H1 (cell line): ENCODE measurements at regions of chr11 and their contacts with region 1.

Region 1: GRCh38 chr11:76919887-76920746 is 59.4 kb downstream of the ACER3 start:
- DNase-seq: peak in 1 of 2 experiments; percentile 71
- H3K4me3 ChIP-seq: no peak overlapping the region
- H3K27ac ChIP-seq: no peak overlapping the region
- H3K4me1 ChIP-seq: peaks cover 0 to 2% (median 0%) of the 10 kb centered on the region in 4 experiments; a peak in 2 of 7 replicates
- H3K27me3 ChIP-seq: no peaks in the 10 kb centered on the region
- CTCF ChIP-seq: peak; percentile 33 to 79 (median 75)
- EP300 ChIP-seq: no peak
- POLR2A ChIP-seq: no peak
- RAD21 ChIP-seq: peak; percentile 64 to 73

Region 2: DNA sequence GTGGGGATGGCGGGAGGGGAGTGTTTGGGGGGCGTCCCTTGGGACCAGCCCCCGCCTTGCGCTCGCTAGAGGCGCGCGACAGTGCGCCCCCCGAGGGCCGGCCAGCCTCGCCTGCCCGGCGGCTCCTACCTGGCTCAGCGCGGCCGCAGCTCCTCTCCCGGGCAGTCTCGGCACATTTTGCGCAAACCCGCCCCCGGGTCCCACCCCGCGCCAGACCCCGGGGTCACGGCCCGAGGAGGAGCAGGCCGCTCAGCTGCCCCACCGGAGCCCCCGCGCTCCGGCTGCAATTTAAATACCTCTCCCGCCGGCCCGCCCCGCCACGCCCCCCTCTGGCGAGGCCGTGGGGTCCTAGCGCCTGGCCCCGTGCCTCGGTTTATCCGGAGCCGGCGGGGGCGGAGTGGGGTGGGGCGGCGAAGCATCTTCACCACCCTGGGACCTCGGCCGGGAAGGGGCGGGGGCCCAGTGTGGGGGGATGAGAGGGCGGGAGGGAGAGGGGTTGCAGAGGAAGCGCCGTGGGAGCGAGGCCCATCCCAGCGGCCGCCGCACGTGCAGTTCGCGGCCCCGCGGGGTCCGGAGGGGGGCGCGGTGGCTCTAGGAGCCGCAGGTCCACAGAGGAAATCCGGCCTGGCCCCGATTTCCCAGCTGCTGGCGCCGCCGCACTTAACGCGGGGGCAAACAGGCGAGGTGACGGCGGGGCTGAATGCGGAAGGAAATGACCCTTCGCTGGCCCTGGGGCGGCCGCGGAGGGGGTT is 249.5 kb before region 1 on chr11 and contains the start of gene LRRC32:
- CTCF ChIA-PET with region 1: no interaction called
- POLR2A ChIA-PET with region 1: no interaction called
- DNase-seq: peak in 1 of 2 experiments; percentile 77
- H3K4me3 ChIP-seq: peak within 1 kb of the TSS; percentile 47 to 68 (median 53)
- H3K27ac ChIP-seq: no peak within 1 kb of the TSS
- H3K4me1 ChIP-seq: peaks cover 0 to 6% (median 1%) of the 10 kb centered on the region in 4 experiments; a peak in 5 of 7 replicates
- H3K27me3 ChIP-seq: peaks cover 0 to 26% (median 17%) of the 10 kb centered on the region in 4 experiments; a peak in 5 of 7 replicates
- CTCF ChIP-seq: no peak
- EP300 ChIP-seq: no peak
- POLR2A ChIP-seq: no peak
- RAD21 ChIP-seq: no peak
- total RNA-seq, gene LRRC32: 0.44 and 0.99 TPM in 2 replicates

Region 3: GRCh38 chr11:76721755-76722677 is 198.1 kb before region 1 on chr11:
- CTCF ChIA-PET with region 1: interaction called, 41 read pairs
- POLR2A ChIA-PET with region 1: no interaction called
- DNase-seq: peak; percentile 54 to 95
- H3K4me3 ChIP-seq: no peak overlapping the region
- H3K27ac ChIP-seq: no peak overlapping the region
- H3K4me1 ChIP-seq: peaks cover 0 to 2% (median 0%) of the 10 kb centered on the region in 4 experiments; a peak in 1 of 7 replicates
- H3K27me3 ChIP-seq: no peaks in the 10 kb centered on the region; a peak in 2 of 7 replicates
- CTCF ChIP-seq: peak; percentile 91 to 94 (median 92)
- EP300 ChIP-seq: no peak
- POLR2A ChIP-seq: no peak
- RAD21 ChIP-seq: peak; percentile 72 to 80

Region 4: DNA sequence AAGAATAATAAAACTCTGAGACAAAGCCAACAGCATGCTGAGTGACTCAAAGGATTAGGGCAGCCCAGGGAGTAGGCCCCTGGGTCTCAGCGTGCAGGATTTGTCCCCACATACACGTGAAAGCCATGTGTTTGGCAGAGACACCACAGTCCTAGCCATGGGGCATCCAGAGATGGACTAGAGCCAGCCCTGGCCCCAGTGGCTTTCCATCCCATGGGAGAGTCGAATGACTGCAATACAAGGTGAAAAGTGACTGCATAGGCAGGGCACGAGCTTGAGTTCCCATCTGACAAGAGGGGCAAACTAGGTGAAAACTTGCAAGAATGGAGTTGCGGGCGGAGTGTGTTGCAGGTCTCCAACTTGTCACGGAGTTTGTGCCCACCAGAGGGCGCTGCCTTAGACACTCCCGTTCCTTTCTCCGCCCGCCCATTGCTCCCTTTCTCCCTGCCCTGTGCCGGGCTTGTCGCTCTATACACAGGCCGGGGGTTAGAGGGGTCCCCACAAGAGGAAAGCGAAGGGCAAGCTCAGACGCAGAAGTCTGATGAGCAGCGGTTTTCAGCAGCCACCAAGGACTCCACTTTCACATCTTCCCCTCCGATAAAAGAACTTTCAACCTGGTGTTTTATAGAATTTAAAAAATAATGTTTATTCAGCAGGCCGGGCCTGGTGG is 112.8 kb before region 1 on chr11:
- CTCF ChIA-PET with region 1: interaction called, 47 read pairs
- POLR2A ChIA-PET with region 1: no interaction called
- DNase-seq: peak in 1 of 2 experiments; percentile 98
- H3K4me3 ChIP-seq: no peak overlapping the region
- H3K27ac ChIP-seq: no peak overlapping the region
- H3K4me1 ChIP-seq: peaks cover 0 to 4% (median 2%) of the 10 kb centered on the region in 4 experiments; a peak in 2 of 7 replicates
- H3K27me3 ChIP-seq: no peaks in the 10 kb centered on the region; a peak in 1 of 7 replicates
- CTCF ChIP-seq: peak; percentile 80 to 94 (median 87)
- EP300 ChIP-seq: no peak
- POLR2A ChIP-seq: no peak
- RAD21 ChIP-seq: peak; percentile 67 to 70

Region 5: DNA sequence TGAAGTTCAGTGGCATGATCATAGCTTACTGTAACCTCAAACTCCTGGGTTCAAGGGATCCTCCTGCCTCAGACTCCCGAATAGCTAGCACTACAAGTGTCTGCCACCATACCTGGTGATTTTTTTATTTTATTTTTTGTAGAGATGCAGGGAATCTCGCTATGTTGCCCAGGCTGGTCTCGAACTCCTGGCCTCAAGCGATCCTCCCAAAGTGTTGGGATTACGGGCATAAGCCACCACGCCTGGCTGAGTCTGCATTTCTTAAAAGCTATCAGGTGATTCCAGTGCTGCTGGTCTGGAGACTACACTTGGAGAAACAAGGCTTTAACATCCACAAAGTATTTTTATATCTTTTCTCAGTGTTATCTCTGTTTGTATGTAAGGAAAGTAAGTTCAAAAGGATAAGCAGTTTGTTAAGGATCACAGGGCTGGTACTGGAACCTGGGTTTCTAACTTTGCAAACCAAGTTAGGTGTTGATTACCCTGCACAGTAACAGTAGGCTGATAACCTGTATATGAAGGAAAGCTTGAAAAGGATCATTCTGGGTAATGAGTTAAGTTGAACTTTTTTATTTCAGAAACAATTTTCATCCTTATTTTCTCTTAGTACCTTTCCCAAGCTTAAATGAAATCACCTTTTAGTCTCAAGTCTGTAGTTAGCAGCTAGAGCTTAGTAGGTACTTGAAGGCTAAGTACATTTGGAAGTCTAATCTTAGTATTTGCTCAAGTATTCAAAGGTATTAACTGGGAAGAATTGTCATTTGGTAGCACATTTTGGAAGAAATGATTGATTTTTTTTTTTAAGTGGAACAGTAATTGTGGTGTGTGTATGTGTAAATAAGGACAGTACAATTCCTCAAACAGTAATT is 46.9 kb before region 1 on chr11:
- CTCF ChIA-PET with region 1: interaction called, 13 read pairs
- POLR2A ChIA-PET with region 1: no interaction called
- DNase-seq: no peak
- H3K4me3 ChIP-seq: no peak overlapping the region
- H3K27ac ChIP-seq: no peak overlapping the region
- H3K4me1 ChIP-seq: no peaks in the 10 kb centered on the region
- H3K27me3 ChIP-seq: no peaks in the 10 kb centered on the region
- CTCF ChIP-seq: no peak
- EP300 ChIP-seq: no peak
- POLR2A ChIP-seq: no peak
- RAD21 ChIP-seq: no peak

Region 6: GRCh38 chr11:76974179-76974891 is 54.2 kb after region 1 on chr11:
- CTCF ChIA-PET with region 1: interaction called, 11 read pairs
- POLR2A ChIA-PET with region 1: no interaction called
- DNase-seq: no peak
- H3K4me3 ChIP-seq: no peak overlapping the region
- H3K27ac ChIP-seq: no peak overlapping the region
- H3K4me1 ChIP-seq: no peaks in the 10 kb centered on the region
- H3K27me3 ChIP-seq: no peaks in the 10 kb centered on the region
- CTCF ChIP-seq: no peak
- EP300 ChIP-seq: no peak
- POLR2A ChIP-seq: no peak
- RAD21 ChIP-seq: no peak

Region 7: DNA sequence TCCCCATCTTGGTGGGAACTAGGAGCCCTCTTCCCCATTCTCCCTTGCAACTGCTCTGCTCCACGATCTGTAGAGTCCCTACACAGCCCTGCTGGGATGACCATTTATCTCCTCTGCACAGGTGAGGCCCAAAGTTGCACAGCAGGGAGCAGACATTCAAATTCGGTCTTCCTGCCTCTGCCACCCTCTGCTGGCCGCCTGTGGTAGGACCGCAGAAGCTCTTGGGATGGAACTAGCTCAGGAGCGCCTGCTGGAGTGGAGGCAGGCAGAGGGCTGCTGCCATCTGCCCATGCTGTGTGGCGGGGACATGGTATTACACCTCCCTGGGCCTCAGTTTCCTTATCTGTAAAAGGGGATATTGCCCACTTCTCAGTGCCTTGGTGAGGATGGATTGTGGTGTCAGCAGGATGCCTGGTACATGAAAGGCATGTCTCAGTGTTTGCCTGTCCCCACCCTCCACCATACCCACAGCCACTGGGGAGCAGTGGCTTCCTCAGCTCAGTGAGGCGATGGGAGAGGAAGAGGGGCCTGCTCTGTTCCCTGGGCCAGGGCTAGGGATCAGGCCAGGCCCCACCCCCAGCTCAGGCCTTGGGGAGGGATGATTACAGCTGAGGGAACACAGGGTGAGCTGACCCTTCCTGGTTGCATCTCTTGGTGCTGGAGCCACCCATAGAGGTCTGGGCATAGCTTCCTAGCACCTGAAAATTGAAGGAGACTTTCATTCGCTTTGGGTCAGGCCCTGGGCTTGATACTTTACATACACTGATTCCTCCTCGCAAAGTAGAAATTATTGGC is 171.2 kb after region 1 on chr11:
- CTCF ChIA-PET with region 1: interaction called, 17 read pairs
- POLR2A ChIA-PET with region 1: no interaction called
- DNase-seq: peak; percentile 73 to 97
- H3K4me3 ChIP-seq: no peak overlapping the region
- H3K27ac ChIP-seq: no peak overlapping the region
- H3K4me1 ChIP-seq: peaks cover 0 to 8% (median 2%) of the 10 kb centered on the region in 4 experiments; a peak in 3 of 7 replicates
- H3K27me3 ChIP-seq: no peaks in the 10 kb centered on the region
- CTCF ChIP-seq: peak; percentile 96 to 100 (median 100)
- EP300 ChIP-seq: no peak
- POLR2A ChIP-seq: no peak
- RAD21 ChIP-seq: peak; percentile 92 to 93